ENCODE measurements at regions of chr15 and their contacts with region 1.

Region 1: DNA sequence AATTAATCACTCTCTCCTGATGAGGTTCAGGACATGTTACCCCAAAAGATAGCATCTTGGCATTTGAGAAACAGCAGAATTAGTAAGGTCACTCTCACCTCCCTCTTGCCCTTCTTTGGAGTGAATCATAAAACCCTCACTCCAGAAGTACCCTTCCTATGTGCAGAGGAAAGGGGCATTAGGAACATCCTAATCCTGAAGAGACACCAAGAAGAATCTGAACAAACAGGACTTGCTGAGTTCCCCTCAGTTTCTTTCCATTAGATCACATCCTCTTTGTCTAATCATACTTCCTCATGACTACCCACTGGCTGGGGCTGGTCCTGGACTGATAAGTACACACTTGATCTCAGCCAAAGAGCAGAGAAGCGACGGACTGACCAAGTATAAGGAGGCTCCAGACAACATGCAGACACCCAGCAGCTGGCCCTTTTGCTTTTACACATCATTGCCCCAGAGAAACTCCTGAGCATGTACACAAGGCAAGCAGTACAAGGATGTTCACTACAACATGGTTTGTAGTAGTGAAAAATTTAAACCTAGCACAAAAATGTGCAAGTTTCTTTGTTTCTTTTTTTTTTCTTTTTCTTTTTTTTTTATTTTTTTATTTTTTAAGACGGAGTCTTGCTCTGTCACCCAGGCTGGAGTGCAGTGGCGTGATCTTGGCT is 15.0 kb upstream of the TM6SF1 start:
- DNase-seq: no peak
- H3K4me3 ChIP-seq: no peak overlapping the region
- CTCF ChIP-seq: no peak

Region 2: DNA sequence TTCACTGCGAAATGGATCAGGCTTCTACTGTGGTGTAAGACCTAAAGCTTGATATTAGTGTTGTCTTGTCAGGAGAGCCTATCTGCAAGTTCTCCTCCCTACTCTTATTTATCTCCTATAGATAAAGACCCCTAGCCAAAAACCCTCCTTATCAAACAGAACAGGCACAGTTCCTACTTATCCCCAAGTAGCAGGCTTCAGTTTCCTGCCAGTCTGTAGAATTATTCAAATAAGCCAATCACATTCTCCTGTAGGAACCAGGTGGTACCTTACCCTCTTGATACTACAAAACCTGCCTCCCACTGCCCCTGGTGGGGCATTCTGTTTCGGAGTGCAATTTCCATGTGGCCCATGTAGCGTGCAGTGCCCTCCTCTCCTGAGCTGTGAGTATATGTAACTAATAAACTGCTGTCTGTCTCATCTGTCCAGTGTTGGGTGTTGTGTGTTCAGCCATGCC is 86.5 kb after region 1 on chr15:
- in situ Hi-C with region 1: loop called (anchors 5 kb)
- DNase-seq: no peak
- H3K4me3 ChIP-seq: no peak overlapping the region
- CTCF ChIP-seq: no peak